Esophagus muscularis mucosa (tissue), 4 donors: ENCODE measurements at regions of chr11 and their contacts with region 1.

Region 1: GRCh38 chr11:27698872-27699474 is 1.3 kb downstream of the BDNF start:
- DNase-seq: no peak
- H3K4me3 ChIP-seq: peak overlapping the region; percentile 52 to 64 (median 54)
- H3K27ac ChIP-seq: no peak overlapping the region
- H3K4me1 ChIP-seq: peaks cover 19 to 37% (median 34%) of the 10 kb centered on the region in 4 donors
- H3K27me3 ChIP-seq: peaks cover 0 to 79% (median 21%) of the 10 kb centered on the region in 4 donors
- CTCF ChIP-seq: peak; percentile 31 to 90 (median 77)
- EP300 ChIP-seq: no peak
- POLR2A ChIP-seq: no peak

Region 2: GRCh38 chr11:27777013-27777412 is 78.0 kb after region 1 on chr11:
- intact Hi-C with region 1: no loop called
- DNase-seq: no peak
- H3K4me3 ChIP-seq: no peak overlapping the region
- H3K27ac ChIP-seq: no peak overlapping the region
- H3K4me1 ChIP-seq: no peaks in the 10 kb centered on the region
- H3K27me3 ChIP-seq: no peaks in the 10 kb centered on the region
- CTCF ChIP-seq: no peak
- EP300 ChIP-seq: no peak
- POLR2A ChIP-seq: no peak

Region 3: GRCh38 chr11:28009388-28009787 is 310.4 kb after region 1 on chr11:
- intact Hi-C with region 1: no loop called
- DNase-seq: no peak
- H3K4me3 ChIP-seq: no peak overlapping the region
- H3K27ac ChIP-seq: no peak overlapping the region
- H3K4me1 ChIP-seq: no peaks in the 10 kb centered on the region
- H3K27me3 ChIP-seq: no peaks in the 10 kb centered on the region
- CTCF ChIP-seq: no peak
- EP300 ChIP-seq: no peak
- POLR2A ChIP-seq: no peak

Region 4: GRCh38 chr11:28697920-28698827 is 999.2 kb after region 1 on chr11:
- intact Hi-C with region 1: loop called (anchors 5 kb)
- DNase-seq: no peak
- H3K4me3 ChIP-seq: no peak overlapping the region
- H3K27ac ChIP-seq: no peak overlapping the region
- H3K4me1 ChIP-seq: no peaks in the 10 kb centered on the region
- H3K27me3 ChIP-seq: no peaks in the 10 kb centered on the region
- CTCF ChIP-seq: peak; percentile 63 to 73 (median 66)
- EP300 ChIP-seq: no peak
- POLR2A ChIP-seq: no peak